Stomach (tissue), 19 donors: ENCODE measurements at regions of chr16 and their contacts with region 1.

Region 1: GRCh38 chr16:75764154-75764768 is 38.0 kb upstream of the CPHXL start:
- DNase-seq: peak; percentile 58 to 89
- H3K4me3 ChIP-seq: no peak overlapping the region
- H3K27ac ChIP-seq: no peak overlapping the region
- H3K4me1 ChIP-seq: no peaks in the 10 kb centered on the region
- H3K27me3 ChIP-seq: no peaks in the 10 kb centered on the region
- CTCF ChIP-seq: peak in 5 of 7 experiments; percentile 65 to 81 (median 76)
- EP300 ChIP-seq: no peak
- POLR2A ChIP-seq: no peak

Region 2: DNA sequence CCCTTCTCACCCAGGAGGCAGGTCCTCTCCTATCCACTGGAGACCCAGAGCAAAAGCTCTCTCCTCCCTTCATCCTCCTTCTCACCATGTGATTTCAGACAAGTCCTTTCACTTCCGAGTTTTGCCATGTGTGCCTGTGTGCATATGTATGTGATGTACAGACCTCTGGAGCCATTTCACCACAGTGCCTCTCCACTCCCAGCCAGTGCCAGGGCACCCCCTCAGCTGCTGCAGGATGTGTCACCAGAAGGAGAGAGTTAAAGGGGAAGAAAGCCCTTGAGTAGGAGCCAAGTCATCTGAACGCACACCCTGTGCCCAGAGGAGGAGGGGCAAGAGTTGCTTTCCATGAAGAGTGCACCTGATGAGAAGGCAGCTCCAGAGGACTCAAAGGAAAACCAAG is 286.2 kb before region 1 on chr16:
- intact Hi-C with region 1: loop called (anchors 5 kb)
- DNase-seq: no peak
- H3K4me3 ChIP-seq: no peak overlapping the region
- H3K27ac ChIP-seq: no peak overlapping the region
- H3K4me1 ChIP-seq: no peaks in the 10 kb centered on the region
- H3K27me3 ChIP-seq: peaks cover 0 to 4% (median 0%) of the 10 kb centered on the region in 3 donors
- CTCF ChIP-seq: no peak
- EP300 ChIP-seq: no peak
- POLR2A ChIP-seq: no peak

Region 3: GRCh38 chr16:75653922-75654321 is 110.3 kb before region 1 on chr16:
- intact Hi-C with region 1: loop called (anchors 5 kb)
- DNase-seq: no peak
- H3K4me3 ChIP-seq: no peak overlapping the region
- H3K27ac ChIP-seq: no peak overlapping the region
- H3K4me1 ChIP-seq: peaks cover 18 to 51% (median 39%) of the 10 kb centered on the region in 4 donors
- H3K27me3 ChIP-seq: no peaks in the 10 kb centered on the region
- CTCF ChIP-seq: no peak
- EP300 ChIP-seq: no peak
- POLR2A ChIP-seq: no peak